Calu3 (cell line): ENCODE measurements at regions of chr4 and their contacts with region 1.

Region 1: DNA sequence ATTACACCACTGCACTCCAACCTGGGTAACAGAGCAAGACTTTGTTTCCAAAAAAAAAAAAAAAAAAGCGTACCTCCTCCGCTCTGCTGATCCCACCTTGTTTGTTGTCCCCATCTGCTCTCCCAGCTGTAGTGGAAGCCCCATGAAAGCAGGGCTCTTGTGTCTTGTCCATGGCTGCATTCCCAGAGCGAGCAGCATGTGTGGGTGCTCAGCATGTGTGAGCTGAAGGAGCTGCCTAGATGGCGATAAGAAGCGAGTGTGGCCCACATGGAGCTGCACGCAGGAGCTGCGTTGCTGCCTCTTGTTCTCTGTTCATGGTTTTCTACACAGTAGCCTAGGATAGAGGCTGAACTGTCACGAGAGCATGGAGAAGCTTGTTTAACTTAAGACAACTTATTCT is 12.4 kb downstream of the NSD2 start:
- DNase-seq: no peak
- H3K4me3 Mint-ChIP-seq: no peak overlapping the region
- H3K27ac Mint-ChIP-seq: no peak overlapping the region
- H3K4me1 Mint-ChIP-seq: peaks cover 20% of the 10 kb centered on the region
- H3K27me3 Mint-ChIP-seq: no peaks in the 10 kb centered on the region
- CTCF ChIP-seq: no peak

Region 2: GRCh38 chr4:1870578-1871443 is 12.8 kb before region 1 on chr4 and contains the start of gene NSD2:
- CTCF ChIA-PET with region 1: interaction called, 10 read pairs
- intact Hi-C with region 1: no loop called
- DNase-seq: peak; percentile 90
- H3K4me3 Mint-ChIP-seq: peak within 1 kb of the TSS; percentile 93
- H3K27ac Mint-ChIP-seq: peak within 1 kb of the TSS; percentile 89
- H3K4me1 Mint-ChIP-seq: peaks cover 18% of the 10 kb centered on the region
- H3K27me3 Mint-ChIP-seq: no peaks in the 10 kb centered on the region
- CTCF ChIP-seq: no peak
- total RNA-seq, gene NSD2: 96.0 and 104 TPM in 2 replicates